ENCODE measurements at regions of chr5 and their contacts with region 1.

Region 1: GRCh38 chr5:150778517-150779396 is at the start of gene SMIM3:
- DNase-seq: peak; percentile 79
- ATAC-seq: peak; percentile 71
- H3K4me3 Mint-ChIP-seq: peak within 1 kb of the TSS; percentile 97
- H3K27ac Mint-ChIP-seq: peak within 1 kb of the TSS; percentile 90
- H3K4me1 Mint-ChIP-seq: peaks cover 67% of the 10 kb centered on the region
- H3K27me3 Mint-ChIP-seq: no peaks in the 10 kb centered on the region
- total RNA-seq, gene SMIM3: 16.4 to 16.7 TPM

Region 2: DNA sequence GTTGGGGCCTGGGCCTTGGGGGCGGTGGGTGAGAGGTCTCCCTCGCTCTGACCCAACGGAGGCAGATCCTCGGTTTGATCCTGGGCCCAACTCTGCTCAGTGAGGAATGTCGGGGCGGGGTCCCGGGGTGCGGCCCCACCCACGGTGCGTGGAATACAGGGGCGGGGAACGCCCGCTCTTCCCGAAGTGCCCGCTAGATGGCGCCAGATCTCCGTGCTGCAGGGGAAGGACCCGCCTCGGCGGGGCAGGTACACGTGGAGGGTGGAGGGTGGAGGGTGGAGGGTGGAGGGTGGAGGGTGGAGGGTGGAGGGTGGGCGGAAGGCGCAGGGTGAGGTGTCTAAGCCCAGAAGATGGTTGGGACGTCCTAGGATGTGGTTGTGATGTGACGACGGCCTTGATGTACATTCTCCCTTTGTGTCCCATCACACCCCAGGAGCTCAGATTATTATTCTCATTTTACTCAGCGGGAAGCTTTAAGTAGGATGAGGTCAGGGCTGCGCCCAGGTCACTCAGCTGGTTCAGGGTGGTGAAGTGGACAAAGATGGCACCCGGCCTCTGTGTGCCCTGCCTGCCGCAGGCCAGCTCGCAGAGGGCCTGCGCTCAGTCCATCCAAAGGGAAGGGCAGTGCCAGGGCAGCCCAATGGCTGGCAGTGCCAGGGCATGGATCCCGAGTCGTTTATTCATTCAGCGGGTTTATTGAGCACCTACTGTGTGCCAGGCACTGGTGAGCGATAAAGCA is 319.8 kb before region 1 on chr5:
- CTCF ChIA-PET with region 1: interaction called, 12 read pairs
- POLR2A ChIA-PET with region 1: no interaction called
- DNase-seq: peak; percentile 90
- ATAC-seq: peak; percentile 93
- H3K4me3 Mint-ChIP-seq: peak overlapping the region; percentile 31
- H3K27ac Mint-ChIP-seq: peak overlapping the region; percentile 83
- H3K4me1 Mint-ChIP-seq: peaks cover 45% of the 10 kb centered on the region
- H3K27me3 Mint-ChIP-seq: no peaks in the 10 kb centered on the region

Region 3: GRCh38 chr5:150700594-150701293 is 78.0 kb before region 1 on chr5 and contains the start of gene RBM22:
- CTCF ChIA-PET with region 1: interaction called, 107 read pairs
- POLR2A ChIA-PET with region 1: interaction called, 35 read pairs
- DNase-seq: peak; percentile 95
- ATAC-seq: peak; percentile 96
- H3K4me3 Mint-ChIP-seq: no peak within 1 kb of the TSS
- H3K27ac Mint-ChIP-seq: no peak within 1 kb of the TSS
- H3K4me1 Mint-ChIP-seq: peaks cover 2% of the 10 kb centered on the region
- H3K27me3 Mint-ChIP-seq: no peaks in the 10 kb centered on the region
- total RNA-seq, gene RBM22: 64.0 to 65.2 TPM

Region 4: DNA sequence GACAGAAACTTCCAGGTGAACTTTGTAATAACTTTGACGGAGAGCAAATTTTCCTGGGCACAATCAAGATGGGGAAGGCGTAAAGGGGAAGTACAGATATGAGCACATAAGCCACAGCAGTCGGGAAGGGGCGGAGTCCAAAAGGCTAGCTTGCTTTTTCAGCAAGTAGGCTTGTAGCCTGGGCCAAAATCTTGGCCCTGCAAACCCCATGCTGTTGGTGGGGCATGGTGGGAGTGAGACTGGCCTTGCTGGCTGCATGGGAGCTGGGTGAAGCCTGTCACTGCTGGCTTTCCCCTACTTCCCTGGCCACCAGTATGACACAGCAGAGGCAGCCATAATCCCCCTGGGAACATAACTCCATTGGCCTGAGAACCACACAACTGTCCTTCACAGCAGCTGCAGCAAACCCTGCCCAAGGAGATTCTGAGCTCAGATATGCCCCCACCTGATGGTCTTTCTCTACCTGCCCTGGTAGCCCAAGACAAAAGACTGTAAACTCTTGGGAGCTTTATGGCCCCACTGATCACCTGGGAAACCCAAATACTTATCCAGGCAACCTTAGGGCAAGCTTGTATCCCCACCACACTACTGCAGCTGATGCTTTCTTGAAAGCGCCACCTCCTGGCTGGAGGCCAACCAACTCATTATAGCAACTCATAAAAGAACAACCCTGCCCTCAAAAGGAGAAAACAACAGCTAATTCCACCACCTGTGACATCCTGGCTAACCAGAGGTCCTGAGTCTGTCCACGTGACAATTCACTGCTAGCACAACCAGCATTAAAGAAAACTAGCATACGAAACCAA is 44.0 kb before region 1 on chr5:
- CTCF ChIA-PET with region 1: interaction called, 17 read pairs
- POLR2A ChIA-PET with region 1: no interaction called
- DNase-seq: no peak
- ATAC-seq: no peak
- H3K4me3 Mint-ChIP-seq: no peak overlapping the region
- H3K27ac Mint-ChIP-seq: peak overlapping the region; percentile 19
- H3K4me1 Mint-ChIP-seq: peaks cover 50% of the 10 kb centered on the region
- H3K27me3 Mint-ChIP-seq: no peaks in the 10 kb centered on the region

Region 5: GRCh38 chr5:150758531-150759333 is 20.0 kb before region 1 on chr5 and contains the start of gene DCTN4:
- CTCF ChIA-PET with region 1: interaction called, 21 read pairs
- POLR2A ChIA-PET with region 1: interaction called, 20 read pairs
- DNase-seq: peak; percentile 95
- ATAC-seq: peak; percentile 98
- H3K4me3 Mint-ChIP-seq: no peak within 1 kb of the TSS
- H3K27ac Mint-ChIP-seq: no peak within 1 kb of the TSS
- H3K4me1 Mint-ChIP-seq: peaks cover 30% of the 10 kb centered on the region
- H3K27me3 Mint-ChIP-seq: no peaks in the 10 kb centered on the region
- total RNA-seq, gene DCTN4: 35.0 to 35.4 TPM

Region 6: DNA sequence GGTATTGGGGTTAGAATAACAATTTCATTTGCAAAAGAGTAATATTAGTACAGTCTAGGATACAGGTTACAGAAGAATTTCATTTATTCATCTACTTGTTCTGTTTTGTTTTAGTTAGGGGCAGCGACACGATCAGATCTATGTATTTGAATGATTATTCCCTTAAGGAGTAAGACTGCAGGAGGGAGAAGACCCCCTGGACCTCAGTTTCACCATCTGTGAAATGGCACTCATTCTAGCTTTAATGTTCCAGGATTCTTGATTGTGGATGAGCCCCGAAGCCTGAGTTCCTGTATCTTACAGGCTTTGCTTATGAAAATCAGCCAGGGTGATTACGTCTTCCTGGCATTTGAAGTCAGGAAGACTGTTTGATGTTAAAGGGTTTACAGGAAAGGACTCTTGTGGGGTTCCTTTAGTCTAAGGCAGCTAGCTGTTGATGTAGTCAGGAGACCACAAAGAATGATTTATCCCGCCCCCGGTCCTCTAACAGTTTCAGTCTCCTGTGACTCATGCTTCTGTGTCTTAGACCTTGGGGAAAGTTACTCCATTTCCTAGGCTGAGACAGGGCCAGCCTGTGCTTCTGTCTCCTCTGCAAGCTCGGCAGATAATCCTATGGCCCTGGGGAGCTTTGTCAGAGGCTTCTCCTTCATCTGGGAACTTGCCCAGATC is 11.3 kb after region 1 on chr5:
- CTCF ChIA-PET with region 1: interaction called, 25 read pairs
- POLR2A ChIA-PET with region 1: no interaction called
- DNase-seq: peak; percentile 78
- ATAC-seq: peak; percentile 98
- H3K4me3 Mint-ChIP-seq: peak overlapping the region; percentile 54
- H3K27ac Mint-ChIP-seq: peak overlapping the region; percentile 86
- H3K4me1 Mint-ChIP-seq: peaks cover 50% of the 10 kb centered on the region
- H3K27me3 Mint-ChIP-seq: no peaks in the 10 kb centered on the region

Region 7: DNA sequence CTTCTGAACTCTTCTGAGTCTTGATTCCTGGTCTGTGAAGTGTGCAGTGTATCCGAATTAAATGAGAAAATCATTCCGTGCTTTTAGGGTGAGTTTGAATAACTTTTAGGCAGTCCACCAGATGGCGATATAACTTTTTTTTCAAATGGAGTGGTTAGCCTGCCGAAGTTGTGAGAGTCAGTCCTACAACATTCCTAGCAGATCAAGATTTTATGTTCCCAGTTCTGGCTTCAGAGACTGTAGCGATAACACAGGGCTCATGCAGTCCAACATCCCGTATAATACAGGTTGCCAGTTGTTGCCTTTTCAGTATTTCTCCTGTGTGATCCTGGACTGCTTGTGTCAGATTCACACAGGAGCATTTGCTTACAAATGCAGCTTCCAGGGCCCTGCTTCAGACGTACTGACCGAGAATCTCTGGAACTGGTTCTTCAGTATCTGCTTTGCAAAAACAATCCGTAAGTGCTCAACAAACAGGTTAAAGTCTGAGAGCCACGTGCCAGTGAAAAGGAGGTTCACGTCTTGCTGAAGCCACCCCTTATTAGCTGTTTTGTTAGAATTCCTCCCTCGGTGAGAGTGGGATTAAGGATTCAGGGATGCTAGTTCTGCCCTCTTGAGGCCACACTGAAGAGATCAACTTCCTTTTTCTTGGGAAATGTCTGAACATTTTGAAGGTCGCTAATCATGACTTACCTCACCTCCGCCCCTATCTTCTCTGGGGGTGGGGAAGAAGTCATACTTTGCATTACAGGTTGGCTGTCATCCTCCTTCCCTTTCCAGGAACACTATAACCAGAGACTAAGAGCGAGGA is 22.6 kb after region 1 on chr5:
- CTCF ChIA-PET with region 1: interaction called, 16 read pairs
- POLR2A ChIA-PET with region 1: interaction called, 5 read pairs
- DNase-seq: no peak
- ATAC-seq: peak; percentile 53
- H3K4me3 Mint-ChIP-seq: no peak overlapping the region
- H3K27ac Mint-ChIP-seq: no peak overlapping the region
- H3K4me1 Mint-ChIP-seq: peaks cover 9% of the 10 kb centered on the region
- H3K27me3 Mint-ChIP-seq: peaks cover 3% of the 10 kb centered on the region

Region 8: GRCh38 chr5:150815010-150815409 is 36.3 kb after region 1 on chr5:
- CTCF ChIA-PET with region 1: no interaction called
- POLR2A ChIA-PET with region 1: no interaction called
- DNase-seq: no peak
- ATAC-seq: no peak
- H3K4me3 Mint-ChIP-seq: no peak overlapping the region
- H3K27ac Mint-ChIP-seq: no peak overlapping the region
- H3K4me1 Mint-ChIP-seq: peaks cover 6% of the 10 kb centered on the region
- H3K27me3 Mint-ChIP-seq: peaks cover 8% of the 10 kb centered on the region

Region 9: DNA sequence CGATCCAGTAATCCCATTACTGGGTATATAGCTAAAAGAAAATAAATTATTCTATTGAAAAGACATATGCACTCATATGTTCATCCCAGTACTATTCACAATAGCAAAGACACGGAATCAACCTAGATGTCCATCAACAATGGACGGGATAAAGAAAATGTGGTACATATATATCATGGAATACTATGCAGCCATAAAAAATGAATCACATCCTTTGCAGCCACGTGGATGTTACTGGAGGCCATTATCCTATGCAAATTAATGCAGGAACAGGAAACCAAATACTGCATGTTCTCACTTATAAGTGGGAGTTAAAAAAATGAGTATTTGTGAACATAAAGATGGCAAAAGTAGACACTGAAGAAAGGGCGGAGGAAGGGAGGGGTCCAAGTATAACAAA is 51.0 kb after region 1 on chr5:
- CTCF ChIA-PET with region 1: no interaction called
- POLR2A ChIA-PET with region 1: no interaction called
- DNase-seq: no peak
- ATAC-seq: no peak
- H3K4me3 Mint-ChIP-seq: no peak overlapping the region
- H3K27ac Mint-ChIP-seq: no peak overlapping the region
- H3K4me1 Mint-ChIP-seq: no peaks in the 10 kb centered on the region
- H3K27me3 Mint-ChIP-seq: peaks cover 10% of the 10 kb centered on the region